ENCODE measurements at regions of chr16 and their contacts with region 1.

Region 1: DNA sequence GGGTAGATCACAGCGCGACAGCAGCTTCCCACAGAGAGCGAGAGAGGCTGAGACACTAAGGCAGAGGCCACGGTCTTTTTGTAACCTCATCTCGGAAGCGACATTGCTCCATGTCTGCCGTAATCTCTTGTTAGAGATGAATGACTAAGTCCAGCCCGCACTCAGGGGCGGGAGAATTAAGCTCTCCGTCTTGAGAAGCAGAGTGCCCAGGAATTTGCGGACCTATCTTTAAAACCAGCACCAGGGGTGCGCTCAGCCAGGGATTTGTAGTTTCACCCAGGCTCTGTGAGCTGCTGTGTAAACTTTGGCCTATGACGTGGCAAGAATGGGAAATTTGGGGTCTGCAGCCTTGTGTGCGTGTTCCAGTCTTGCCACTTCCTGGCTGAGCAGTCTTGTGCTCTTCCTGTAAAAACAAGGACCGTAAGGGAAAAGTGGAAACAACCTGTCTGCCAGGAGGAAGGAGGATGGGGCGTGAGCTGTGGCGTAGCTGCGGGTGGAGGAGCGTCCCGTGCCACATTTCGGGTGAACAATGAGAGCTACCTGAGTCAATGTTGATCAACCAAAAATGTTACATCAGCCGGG is 16.0 kb upstream of the JPH3 start:
- DNase-seq: peak in 1 of 4 experiments; percentile 41
- ATAC-seq: peak; percentile 34
- H3K4me3 ChIP-seq: no peak overlapping the region
- H3K27ac ChIP-seq: no peak overlapping the region
- H3K4me1 ChIP-seq: peaks cover 18 to 31% of the 10 kb centered on the region in 2 experiments; a peak in 4 of 5 replicates
- H3K27me3 ChIP-seq: peaks cover 50 to 82% of the 10 kb centered on the region in 2 experiments
- CTCF ChIP-seq: no peak
- EP300 ChIP-seq: no peak
- POLR2A ChIP-seq: no peak
- RAD21 ChIP-seq: no peak

Region 2: GRCh38 chr16:87611456-87611855 is 25.2 kb after region 1 on chr16:
- CTCF ChIA-PET with region 1: no interaction called
- POLR2A ChIA-PET with region 1: no interaction called
- in situ Hi-C with region 1: no loop called
- intact Hi-C with region 1: no loop called
- DNase-seq: no peak
- ATAC-seq: no peak
- H3K4me3 ChIP-seq: no peak overlapping the region
- H3K27ac ChIP-seq: no peak overlapping the region
- H3K4me1 ChIP-seq: no peaks in the 10 kb centered on the region
- H3K27me3 ChIP-seq: peaks cover 24 to 76% of the 10 kb centered on the region in 2 experiments; a peak in 3 of 5 replicates
- CTCF ChIP-seq: no peak
- EP300 ChIP-seq: no peak
- POLR2A ChIP-seq: no peak
- RAD21 ChIP-seq: no peak

Region 3: GRCh38 chr16:87661561-87661960 is 75.3 kb after region 1 on chr16:
- CTCF ChIA-PET with region 1: no interaction called
- POLR2A ChIA-PET with region 1: no interaction called
- in situ Hi-C with region 1: no loop called
- intact Hi-C with region 1: no loop called
- DNase-seq: peak; percentile 68 to 75 (median 73)
- ATAC-seq: peak; percentile 84
- H3K4me3 ChIP-seq: no peak overlapping the region
- H3K27ac ChIP-seq: no peak overlapping the region
- H3K4me1 ChIP-seq: peaks cover 0 to 4% of the 10 kb centered on the region in 2 experiments; a peak in 1 of 5 replicates
- H3K27me3 ChIP-seq: peaks cover 38 to 77% of the 10 kb centered on the region in 2 experiments
- CTCF ChIP-seq: no peak
- EP300 ChIP-seq: no peak
- POLR2A ChIP-seq: no peak
- RAD21 ChIP-seq: no peak

Region 4: GRCh38 chr16:87765776-87766484 is 179.6 kb after region 1 on chr16 and contains the start of gene KLHDC4:
- CTCF ChIA-PET with region 1: interaction called, 8 read pairs
- POLR2A ChIA-PET with region 1: no interaction called
- in situ Hi-C with region 1: no loop called
- intact Hi-C with region 1: loop called (anchors 2 kb)
- DNase-seq: peak; percentile 89 to 92 (median 90)
- ATAC-seq: peak; percentile 91
- H3K4me3 ChIP-seq: peak within 1 kb of the TSS; percentile 94
- H3K27ac ChIP-seq: peak within 1 kb of the TSS; percentile 83
- H3K4me1 ChIP-seq: peaks cover 5 to 25% of the 10 kb centered on the region in 2 experiments; a peak in 4 of 5 replicates
- H3K27me3 ChIP-seq: no peaks in the 10 kb centered on the region
- CTCF ChIP-seq: no peak
- EP300 ChIP-seq: no peak
- POLR2A ChIP-seq: peak; percentile 95
- RAD21 ChIP-seq: no peak
- polyA plus RNA-seq, gene KLHDC4: 1.3 to 2.5 TPM